Activated CD4-positive, alpha-beta memory T cell treated with anti-CD3 and anti-CD28 coated beads, Interleukin-2, amount 10 ng/mL, durations not matched to agents 7 days and 5 days (primary cell): ENCODE measurements at regions of chr2 and their contacts with region 1.

Region 1: DNA sequence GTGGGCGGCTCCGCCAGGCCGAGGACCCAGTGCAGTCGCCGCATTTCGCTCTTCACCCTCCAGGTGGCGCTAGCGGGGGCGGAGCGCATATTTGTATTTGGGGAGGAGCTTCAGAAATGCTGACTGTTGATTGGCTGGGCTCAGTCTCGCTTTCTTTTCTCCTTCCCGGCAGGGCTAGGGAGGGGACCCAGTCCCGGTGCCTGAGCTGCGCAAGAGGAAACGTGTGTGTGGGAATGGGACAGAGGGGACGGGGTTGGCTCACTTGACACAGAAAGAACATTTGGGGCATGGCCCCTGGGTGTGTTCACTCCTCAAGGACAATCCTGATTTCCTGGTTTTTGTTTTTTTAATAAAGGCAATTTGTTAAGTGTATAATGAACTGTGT is 20.3 kb upstream of the DNMT3A start:
- DNase-seq: peak; percentile 96
- H3K4me3 Mint-ChIP-seq: peak overlapping the region; percentile 83
- H3K27ac Mint-ChIP-seq: peak overlapping the region; percentile 82
- H3K4me1 Mint-ChIP-seq: peaks cover 22% of the 10 kb centered on the region
- H3K27me3 Mint-ChIP-seq: no peaks in the 10 kb centered on the region

Region 2: DNA sequence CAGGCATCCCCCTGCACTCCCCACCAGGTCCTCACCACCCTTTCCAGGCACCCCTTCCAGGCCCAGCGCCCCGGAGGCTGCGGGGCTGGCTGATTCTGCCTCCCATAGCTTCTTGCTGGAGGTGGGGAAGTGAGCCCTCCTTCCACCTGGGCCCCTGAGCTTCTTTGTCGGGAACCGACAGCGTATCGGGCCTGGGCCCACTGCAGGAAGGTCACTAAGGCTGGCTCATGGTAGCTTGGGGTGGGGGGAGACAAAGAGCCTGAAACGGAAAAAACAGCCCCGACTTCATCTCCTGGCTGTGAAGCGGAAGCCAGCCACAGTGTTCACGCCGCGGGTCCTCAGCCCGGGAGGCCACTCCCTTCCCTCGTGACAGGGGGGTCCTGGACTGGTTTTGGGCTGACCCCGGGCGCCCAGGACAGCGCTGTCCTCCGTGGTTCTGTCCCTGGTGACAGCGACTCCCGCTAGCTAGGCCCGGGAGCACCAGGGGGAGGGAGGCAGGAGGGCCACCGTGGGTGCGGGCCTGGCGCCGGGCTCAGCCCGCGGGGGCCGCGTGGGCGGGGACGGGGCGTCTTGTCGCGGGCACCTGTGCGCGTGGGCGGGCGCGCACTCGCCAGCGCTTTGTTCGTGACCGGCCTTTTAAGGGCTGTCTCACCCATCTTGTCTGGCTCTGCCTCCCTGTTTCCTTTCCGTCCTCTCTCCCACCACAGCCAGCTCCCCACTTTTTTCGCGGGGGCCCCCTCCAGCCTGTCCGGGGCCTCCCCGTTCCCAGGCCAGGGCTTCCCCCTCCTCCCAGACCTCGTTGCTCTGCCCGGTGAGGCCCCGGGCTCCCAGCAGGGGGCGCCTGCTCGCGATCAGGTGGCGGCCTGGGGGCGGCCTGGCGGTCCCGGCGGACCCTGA is 85.2 kb before region 1 on chr2:
- CTCF ChIA-PET with region 1: interaction called, 25 read pairs
- POLR2A ChIA-PET with region 1: interaction called, 12 read pairs
- DNase-seq: peak; percentile 79
- H3K4me3 Mint-ChIP-seq: peak overlapping the region; percentile 53
- H3K27ac Mint-ChIP-seq: peak overlapping the region; percentile 82
- H3K4me1 Mint-ChIP-seq: peaks cover 65% of the 10 kb centered on the region
- H3K27me3 Mint-ChIP-seq: no peaks in the 10 kb centered on the region

Region 3: GRCh38 chr2:25314514-25315315 is 47.3 kb before region 1 on chr2:
- CTCF ChIA-PET with region 1: interaction called, 27 read pairs
- POLR2A ChIA-PET with region 1: interaction called, 27 read pairs
- DNase-seq: peak; percentile 85
- H3K4me3 Mint-ChIP-seq: peak overlapping the region; percentile 74
- H3K27ac Mint-ChIP-seq: peak overlapping the region; percentile 90
- H3K4me1 Mint-ChIP-seq: peaks cover 59% of the 10 kb centered on the region
- H3K27me3 Mint-ChIP-seq: no peaks in the 10 kb centered on the region

Region 4: GRCh38 chr2:25376750-25377621 is 14.9 kb after region 1 on chr2:
- CTCF ChIA-PET with region 1: interaction called, 131 read pairs
- POLR2A ChIA-PET with region 1: interaction called, 41 read pairs
- DNase-seq: peak; percentile 95
- H3K4me3 Mint-ChIP-seq: peak overlapping the region; percentile 49
- H3K27ac Mint-ChIP-seq: peak overlapping the region; percentile 96
- H3K4me1 Mint-ChIP-seq: peaks cover 28% of the 10 kb centered on the region
- H3K27me3 Mint-ChIP-seq: no peaks in the 10 kb centered on the region

Region 5: DNA sequence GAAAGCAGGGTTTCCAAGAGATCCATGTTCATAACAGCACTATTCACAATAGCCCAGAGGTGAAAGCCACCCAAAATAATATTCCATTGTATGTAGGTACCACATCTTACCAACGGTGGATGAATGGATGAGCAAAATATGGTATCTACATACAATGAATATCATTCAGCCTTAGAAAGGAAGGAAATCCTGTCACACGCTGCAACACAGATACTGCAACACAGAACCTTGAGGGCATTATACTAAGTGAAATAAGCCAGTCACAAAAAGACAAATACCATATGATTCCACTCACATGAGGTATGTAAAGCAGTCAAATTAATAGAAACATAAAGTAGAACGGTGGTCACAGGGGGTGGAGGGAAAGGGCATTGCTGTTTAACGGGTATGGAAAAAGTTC is 155.7 kb after region 1 on chr2:
- CTCF ChIA-PET with region 1: interaction called, 10 read pairs
- POLR2A ChIA-PET with region 1: interaction called, 6 read pairs
- DNase-seq: no peak
- H3K4me3 Mint-ChIP-seq: no peak overlapping the region
- H3K27ac Mint-ChIP-seq: no peak overlapping the region
- H3K4me1 Mint-ChIP-seq: peaks cover 29% of the 10 kb centered on the region
- H3K27me3 Mint-ChIP-seq: no peaks in the 10 kb centered on the region

Region 6: DNA sequence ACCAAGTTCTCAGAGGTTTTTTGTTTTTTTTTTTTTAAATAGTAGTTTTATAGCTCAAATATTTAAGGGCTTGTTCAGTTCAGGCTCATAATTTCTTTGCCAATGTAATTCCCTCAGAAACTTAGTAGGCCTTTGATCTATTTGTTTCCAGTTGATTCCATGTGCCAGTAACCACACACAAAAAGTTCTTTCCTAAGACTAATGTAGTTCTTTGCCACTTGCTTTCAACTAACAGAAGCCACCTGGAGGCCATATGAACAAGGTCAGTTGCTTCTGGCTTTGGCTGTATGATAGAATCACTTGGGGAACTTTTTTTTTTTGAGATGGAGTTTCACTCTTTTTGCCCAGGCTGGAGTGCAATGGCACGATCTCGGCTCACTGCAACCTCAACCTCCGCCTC is 210.6 kb after region 1 on chr2:
- CTCF ChIA-PET with region 1: no interaction called
- POLR2A ChIA-PET with region 1: no interaction called
- DNase-seq: no peak
- H3K4me3 Mint-ChIP-seq: no peak overlapping the region
- H3K27ac Mint-ChIP-seq: no peak overlapping the region
- H3K4me1 Mint-ChIP-seq: no peaks in the 10 kb centered on the region
- H3K27me3 Mint-ChIP-seq: no peaks in the 10 kb centered on the region

Region 7: DNA sequence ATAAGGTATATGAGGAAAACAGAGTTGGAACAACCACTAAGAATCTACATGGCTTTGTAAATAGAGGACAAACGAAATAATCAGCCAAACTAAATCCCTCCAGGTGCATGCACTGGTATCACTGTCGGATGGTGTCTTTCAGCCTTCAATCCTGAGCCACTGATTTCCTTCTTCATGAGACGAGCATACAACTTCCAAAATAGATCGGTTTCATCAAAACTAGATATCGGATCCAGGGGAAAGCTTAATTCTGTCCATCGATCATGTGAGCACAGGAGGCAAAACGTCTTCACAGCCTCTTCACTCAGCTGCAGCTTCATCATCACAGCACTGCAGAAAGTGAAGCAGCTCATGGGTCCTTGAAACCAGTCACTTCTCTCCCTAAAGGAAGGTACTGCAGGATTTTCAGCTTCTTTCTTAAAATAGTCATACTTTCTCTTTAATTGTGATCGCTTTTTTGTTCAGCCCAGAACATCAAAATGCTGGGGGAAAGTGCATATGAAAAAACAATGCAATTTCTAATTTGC is 230.8 kb after region 1 on chr2:
- CTCF ChIA-PET with region 1: interaction called, 10 read pairs
- POLR2A ChIA-PET with region 1: interaction called, 3 read pairs
- DNase-seq: no peak
- H3K4me3 Mint-ChIP-seq: no peak overlapping the region
- H3K27ac Mint-ChIP-seq: peak overlapping the region; percentile 29
- H3K4me1 Mint-ChIP-seq: peaks cover 43% of the 10 kb centered on the region
- H3K27me3 Mint-ChIP-seq: no peaks in the 10 kb centered on the region